Activated naive CD4-positive, alpha-beta T cell treated with anti-CD3 and anti-CD28 coated beads, Interleukin-2, amount 10 ng/mL, durations not matched to agents 7 days and 5 days (primary cell): ENCODE measurements at regions of chr15 and their contacts with region 1.

Region 1: GRCh38 chr15:79028411-79028964 is 62.1 kb downstream of the RASGRF1 start:
- DNase-seq: peak; percentile 56
- H3K4me3 Mint-ChIP-seq: no peak overlapping the region
- H3K27ac Mint-ChIP-seq: no peak overlapping the region
- H3K4me1 Mint-ChIP-seq: no peaks in the 10 kb centered on the region
- H3K27me3 Mint-ChIP-seq: peaks cover 6% of the 10 kb centered on the region

Region 2: DNA sequence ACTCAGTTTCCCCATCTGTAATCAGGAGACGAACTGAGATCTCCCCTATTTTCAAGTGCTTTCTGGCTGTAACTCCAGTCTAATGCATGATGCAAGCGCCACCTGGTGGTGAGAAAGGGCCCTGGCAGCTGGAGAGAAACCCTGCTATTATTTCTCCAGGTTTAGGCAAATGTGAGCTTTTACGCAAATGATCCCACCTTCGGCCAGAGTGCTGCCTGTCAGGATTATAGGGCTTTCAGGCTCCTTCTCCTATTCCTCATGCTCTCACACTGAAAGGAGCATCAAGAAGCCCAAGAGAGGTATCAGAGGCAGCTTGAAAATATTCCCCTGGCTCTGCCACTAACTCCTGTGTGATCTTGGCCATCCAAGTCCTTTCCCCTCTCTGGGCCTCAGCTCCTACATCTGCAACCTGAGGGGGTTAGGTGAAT is 156.0 kb after region 1 on chr15:
- CTCF ChIA-PET with region 1: interaction called, 102 read pairs
- DNase-seq: peak; percentile 79
- H3K4me3 Mint-ChIP-seq: no peak overlapping the region
- H3K27ac Mint-ChIP-seq: no peak overlapping the region
- H3K4me1 Mint-ChIP-seq: no peaks in the 10 kb centered on the region
- H3K27me3 Mint-ChIP-seq: peaks cover 18% of the 10 kb centered on the region